Colonic mucosa (tissue), 4 donors: ENCODE measurements at regions of chr13 and their contacts with region 1.

Region 1: GRCh38 chr13:113155201-113155600 is 3.2 kb upstream of the PROZ start:
- DNase-seq: no peak
- H3K4me3 ChIP-seq: no peak overlapping the region
- H3K27ac ChIP-seq: no peak overlapping the region
- H3K4me1 ChIP-seq: peaks cover 5% of the 10 kb centered on the region
- H3K27me3 ChIP-seq: no peaks in the 10 kb centered on the region
- CTCF ChIP-seq: no peak

Region 2: GRCh38 chr13:113208424-113209335 is 53.5 kb after region 1 on chr13 and contains the start of gene PCID2:
- intact Hi-C with region 1: loop called (anchors 5 kb)
- DNase-seq: peak; percentile 88
- H3K4me3 ChIP-seq: peak within 1 kb of the TSS; percentile 81
- H3K27ac ChIP-seq: peak within 1 kb of the TSS; percentile 99
- H3K4me1 ChIP-seq: peaks cover 5% of the 10 kb centered on the region
- H3K27me3 ChIP-seq: no peaks in the 10 kb centered on the region
- CTCF ChIP-seq: no peak
- total RNA-seq, gene PCID2: 23.4 to 40.2 TPM

Region 3: GRCh38 chr13:113448885-113449692 is 293.9 kb after region 1 on chr13:
- intact Hi-C with region 1: no loop called
- DNase-seq: peak; percentile 85
- H3K4me3 ChIP-seq: peak overlapping the region; percentile 28
- H3K27ac ChIP-seq: peak overlapping the region; percentile 86
- H3K4me1 ChIP-seq: no peaks in the 10 kb centered on the region
- H3K27me3 ChIP-seq: no peaks in the 10 kb centered on the region
- CTCF ChIP-seq: no peak